ENCODE measurements at regions of chr11 and their contacts with region 1.

Region 1: DNA sequence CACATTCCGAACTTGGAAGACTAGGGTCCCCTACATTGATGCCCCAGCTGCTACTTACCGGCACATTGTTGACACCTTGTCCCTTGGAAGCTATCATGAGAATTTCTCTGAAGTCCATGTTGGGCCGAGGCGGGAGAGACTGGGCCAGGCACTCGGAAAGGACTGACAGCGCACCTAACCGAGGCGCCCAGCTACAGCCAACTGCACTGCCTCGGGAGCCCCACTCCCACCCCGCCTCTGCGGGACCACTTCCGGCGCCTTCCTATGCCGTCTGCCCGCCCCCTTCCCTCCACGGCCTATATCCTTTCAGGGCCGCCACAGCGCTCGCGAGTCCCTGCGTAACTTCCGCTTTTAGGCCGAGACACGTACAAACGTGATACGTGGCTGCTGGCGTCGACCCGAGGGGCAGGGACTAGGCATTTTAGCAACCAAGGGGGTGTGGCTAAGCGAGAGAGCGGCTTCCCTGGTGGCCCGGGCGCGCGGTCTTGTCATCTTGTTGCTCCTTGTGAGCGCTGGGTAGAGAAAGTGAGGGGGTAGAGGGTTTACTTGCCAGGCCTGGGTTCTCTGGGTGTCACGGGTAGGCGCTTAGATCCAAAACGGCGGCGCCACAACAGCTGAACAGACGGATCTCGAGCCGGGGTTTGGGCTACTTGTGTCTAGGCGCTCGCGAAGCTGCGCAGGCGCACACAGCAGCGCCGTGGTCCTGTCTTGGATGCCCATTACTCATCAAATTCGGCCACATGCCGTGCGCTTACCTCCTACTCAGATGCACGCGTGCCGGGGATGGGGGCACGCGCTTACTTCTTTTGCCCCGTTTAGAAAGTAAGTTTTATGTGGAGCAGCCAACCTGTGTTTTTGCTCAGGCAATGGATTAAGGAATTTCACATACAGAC is at the start of gene SPTY2D1:
- DNase-seq: peak; percentile 98 to 100 (median 99)
- H3K4me3 ChIP-seq: peak within 1 kb of the TSS; percentile 66 to 99 (median 90)
- H3K27ac ChIP-seq: peak within 1 kb of the TSS; percentile 28 to 98 (median 93)
- H3K27me3 ChIP-seq: no peaks in the 10 kb centered on the region
- CTCF ChIP-seq: peak in 27 of 56 donors; percentile 5 to 52 (median 30)
- total RNA-seq, gene SPTY2D1: 7.7 to 28.7 (median 12.0) TPM

Region 2: DNA sequence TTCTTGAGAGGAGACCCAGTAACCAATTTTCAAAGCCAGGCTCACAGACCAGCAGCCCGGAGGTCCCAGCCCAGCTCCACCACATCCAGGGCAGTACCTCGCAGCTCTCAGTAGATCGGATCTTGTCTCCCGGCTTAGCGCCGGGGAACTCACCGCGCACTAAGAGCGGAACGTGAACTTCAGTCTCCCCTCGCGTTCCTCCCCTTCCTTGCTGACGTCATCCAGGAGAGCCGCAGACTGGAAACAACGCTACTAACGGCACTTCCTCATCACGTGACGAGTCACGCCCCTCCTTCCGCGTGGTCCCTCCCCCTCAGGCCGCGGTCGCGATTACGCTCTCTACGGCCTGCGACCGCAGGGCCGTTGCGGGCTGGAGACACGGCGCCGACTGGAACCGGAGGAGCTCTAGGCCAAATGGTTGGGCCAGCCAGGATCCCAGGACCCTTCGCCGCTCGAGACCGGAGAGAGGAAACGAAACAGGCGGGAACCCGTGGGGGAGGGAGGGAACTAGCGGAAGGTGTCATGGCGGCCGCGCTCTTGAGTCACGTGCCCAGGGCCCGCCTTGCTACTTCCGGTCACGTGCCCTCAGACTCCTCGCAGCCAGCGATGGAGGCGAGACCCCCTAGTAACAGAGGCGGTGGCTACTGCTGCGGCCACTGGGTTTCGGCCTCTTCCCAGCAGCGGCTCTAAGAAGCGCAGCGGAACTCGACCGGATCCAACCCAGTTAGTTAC is 312.2 kb before region 1 on chr11 and contains the starts of genes GTF2H1 and HPS5:
- intact Hi-C with region 1: loop called (anchors 2 to 5 kb)
- DNase-seq: peak; percentile 94 to 97 (median 96)
- H3K4me3 ChIP-seq: peak within 1 kb of the TSS; percentile 48 to 99 (median 92)
- H3K27ac ChIP-seq: peak within 1 kb of the TSS; percentile 91 to 100 (median 99)
- H3K27me3 ChIP-seq: no peaks in the 10 kb centered on the region
- CTCF ChIP-seq: peak in 13 of 56 donors; percentile 3 to 47 (median 17)
- total RNA-seq, gene GTF2H1: 30.5 to 68.1 (median 49.7) TPM
- total RNA-seq, gene HPS5: 12.8 to 35.8 (median 20.1) TPM

Region 3: DNA sequence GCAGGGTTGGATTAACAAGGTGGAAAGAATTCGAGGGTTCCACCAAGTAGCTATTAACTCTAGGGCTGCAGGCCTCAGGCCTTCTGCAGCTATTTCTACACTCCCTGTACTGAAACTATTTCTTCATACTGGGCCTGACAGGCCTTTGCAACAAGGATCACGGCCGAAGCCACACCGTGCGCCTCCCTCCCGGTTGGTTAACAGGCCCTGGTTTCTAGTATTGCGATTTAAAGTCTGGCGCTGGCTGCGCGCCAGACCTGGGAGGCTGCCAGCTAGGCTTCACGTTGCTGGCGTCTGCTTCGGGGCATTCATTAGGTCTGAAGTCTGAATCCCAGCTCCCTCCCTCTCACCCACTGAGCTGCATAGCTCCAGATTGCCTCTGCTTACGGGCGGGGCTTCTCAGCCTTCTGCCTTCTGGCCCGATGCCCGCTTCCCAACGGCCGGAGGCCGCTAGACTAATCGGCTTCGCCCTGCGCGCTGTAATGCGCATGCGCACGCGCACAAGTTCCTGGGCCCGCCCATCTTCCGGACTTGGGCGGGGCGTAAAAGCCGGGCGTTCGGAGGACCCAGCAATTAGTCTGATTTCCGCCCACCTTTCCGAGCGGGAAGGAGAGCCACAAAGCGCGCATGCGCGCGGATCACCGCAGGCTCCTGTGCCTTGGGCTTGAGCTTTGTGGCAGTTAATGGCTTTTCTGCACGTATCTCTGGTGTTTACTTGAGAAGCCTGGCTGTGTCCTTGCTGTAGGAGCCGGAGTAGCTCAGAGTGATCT is 238.5 kb before region 1 on chr11:
- intact Hi-C with region 1: loop called (anchors 2 to 5 kb)
- DNase-seq: peak; percentile 92 to 98 (median 96)
- H3K4me3 ChIP-seq: peak overlapping the region; percentile 65 to 97 (median 87)
- H3K27ac ChIP-seq: peak overlapping the region; percentile 32 to 98 (median 92)
- H3K27me3 ChIP-seq: no peaks in the 10 kb centered on the region
- CTCF ChIP-seq: peak in 22 of 56 donors; percentile 8 to 53 (median 24)

Region 4: GRCh38 chr11:18526521-18527296 is 107.7 kb before region 1 on chr11 and contains the start of gene TSG101:
- intact Hi-C with region 1: loop called (anchors 2 kb)
- DNase-seq: peak; percentile 93 to 98 (median 96)
- H3K4me3 ChIP-seq: peak within 1 kb of the TSS; percentile 59 to 100 (median 96)
- H3K27ac ChIP-seq: peak within 1 kb of the TSS; percentile 45 to 97 (median 89)
- H3K27me3 ChIP-seq: no peaks in the 10 kb centered on the region
- CTCF ChIP-seq: peak in 18 of 56 donors; percentile 7 to 39 (median 16)
- total RNA-seq, gene TSG101: 26.8 to 73.5 (median 51.6) TPM

Region 5: DNA sequence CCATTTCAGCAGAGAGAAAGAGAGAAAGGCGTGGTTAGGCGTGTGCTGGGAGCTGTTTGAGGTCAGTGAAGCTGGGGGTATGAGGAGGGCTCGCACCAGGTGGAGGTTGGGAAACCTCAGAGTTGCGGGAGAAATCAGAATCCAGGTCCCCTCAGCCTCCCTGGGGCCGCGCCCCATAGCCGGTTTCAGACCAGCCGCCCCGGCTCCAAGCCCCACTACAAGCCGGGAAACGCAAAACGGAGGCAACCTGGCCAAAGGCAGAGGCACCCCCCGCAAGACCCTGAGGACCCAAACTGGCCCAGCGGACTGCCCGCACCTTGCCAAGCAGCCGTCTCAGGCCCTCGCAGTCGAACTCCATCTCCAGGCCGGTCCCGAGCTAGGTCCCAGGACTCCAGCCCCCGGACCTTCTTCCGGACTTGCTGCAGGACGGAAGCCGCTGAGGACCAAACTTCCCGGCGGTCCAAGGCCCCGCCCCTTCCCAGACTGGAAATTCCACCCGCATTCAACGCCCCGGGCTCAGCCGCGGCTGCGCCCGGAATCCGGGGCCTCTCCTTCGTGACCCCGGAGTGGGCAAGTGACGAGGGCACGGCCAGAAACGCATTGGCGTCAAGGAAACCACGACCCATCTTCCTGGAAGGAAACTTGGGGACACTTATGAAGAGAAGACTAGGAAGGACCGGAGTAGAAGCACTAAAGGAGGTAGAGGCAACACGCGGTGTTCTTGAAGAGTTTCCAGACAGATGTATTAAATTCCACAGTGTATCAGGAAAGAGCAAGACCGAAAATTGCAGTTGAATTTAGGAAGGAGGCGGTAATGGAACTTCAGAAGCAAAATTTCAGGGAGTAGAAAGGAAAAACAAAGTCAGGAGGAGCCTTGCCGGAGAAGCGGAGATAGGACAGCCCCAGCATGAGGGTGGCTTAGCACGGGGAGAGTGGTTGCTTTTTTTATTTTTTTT is 45.8 kb before region 1 on chr11 and contains the start of gene UEVLD:
- intact Hi-C with region 1: loop called (anchors 1 to 2 kb)
- DNase-seq: peak; percentile 78 to 92 (median 84)
- H3K4me3 ChIP-seq: peak within 1 kb of the TSS; percentile 58 to 100 (median 90)
- H3K27ac ChIP-seq: peak within 1 kb of the TSS in 58 of 59 donors; percentile 16 to 90 (median 76)
- H3K27me3 ChIP-seq: no peaks in the 10 kb centered on the region
- CTCF ChIP-seq: peak in 33 of 56 donors; percentile 10 to 50 (median 25)
- total RNA-seq, gene UEVLD: 7.9 to 27.1 (median 16.5) TPM

Region 6: DNA sequence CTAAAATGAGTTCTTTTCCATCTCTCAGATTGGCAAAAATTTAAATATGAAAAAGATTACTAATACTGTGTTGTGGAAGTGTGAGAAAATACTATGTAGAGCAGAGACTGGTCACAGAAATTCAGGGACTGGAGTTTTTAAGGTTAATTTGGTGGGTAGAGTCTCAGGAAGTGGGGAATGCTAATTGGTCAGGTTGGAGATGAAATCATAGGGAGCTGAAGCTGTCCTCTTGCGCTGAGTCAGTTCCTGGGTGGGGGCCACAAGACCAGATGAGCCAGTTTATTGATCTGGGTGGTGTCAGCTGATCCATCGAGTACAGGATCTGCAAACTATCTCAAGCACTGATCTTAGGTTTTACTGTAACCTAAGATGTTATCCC is 34.8 kb after region 1 on chr11:
- intact Hi-C with region 1: no loop called
- DNase-seq: no peak
- H3K4me3 ChIP-seq: no peak overlapping the region
- H3K27ac ChIP-seq: no peak overlapping the region
- H3K27me3 ChIP-seq: peaks cover 0 to 4% (median 0%) of the 10 kb centered on the region in 45 donors
- CTCF ChIP-seq: no peak

Region 7: GRCh38 chr11:18698341-18699268 is 64.2 kb after region 1 on chr11 and contains the start of gene TMEM86A:
- intact Hi-C with region 1: loop called (anchors 2 to 5 kb)
- DNase-seq: peak; percentile 93 to 99 (median 94)
- H3K4me3 ChIP-seq: peak within 1 kb of the TSS; percentile 60 to 99 (median 83)
- H3K27ac ChIP-seq: peak within 1 kb of the TSS in 57 of 59 donors; percentile 16 to 95 (median 80)
- H3K27me3 ChIP-seq: no peaks in the 10 kb centered on the region
- CTCF ChIP-seq: peak in 11 of 56 donors; percentile 5 to 22 (median 9)
- total RNA-seq, gene TMEM86A: 4.9 to 18.5 (median 10.7) TPM

Measured in dorsolateral prefrontal cortex (tissue), 120 donors.